Dorsolateral prefrontal cortex (tissue), 120 donors: ENCODE measurements at regions of chr4 and their contacts with region 1.

Region 1: GRCh38 chr4:140326395-140326993 is 47.0 kb upstream of the SCOC start:
- DNase-seq: peak in 3 of 10 donors; percentile 27 to 66 (median 60)
- H3K4me3 ChIP-seq: no peak overlapping the region
- H3K27ac ChIP-seq: no peak overlapping the region
- H3K27me3 ChIP-seq: no peaks in the 10 kb centered on the region
- CTCF ChIP-seq: peak; percentile 7 to 90 (median 72)

Region 2: GRCh38 chr4:140012688-140013486 is 313.6 kb before region 1 on chr4:
- intact Hi-C with region 1: loop called in 1 of 2 experiments (anchors 5 kb)
- DNase-seq: peak in 5 of 10 donors; percentile 25 to 73 (median 52)
- H3K4me3 ChIP-seq: peak overlapping the region in 11 of 59 donors; percentile 4 to 51 (median 18)
- H3K27ac ChIP-seq: no peak overlapping the region
- H3K27me3 ChIP-seq: no peaks in the 10 kb centered on the region
- CTCF ChIP-seq: peak in 55 of 56 donors; percentile 22 to 84 (median 63)

Region 3: DNA sequence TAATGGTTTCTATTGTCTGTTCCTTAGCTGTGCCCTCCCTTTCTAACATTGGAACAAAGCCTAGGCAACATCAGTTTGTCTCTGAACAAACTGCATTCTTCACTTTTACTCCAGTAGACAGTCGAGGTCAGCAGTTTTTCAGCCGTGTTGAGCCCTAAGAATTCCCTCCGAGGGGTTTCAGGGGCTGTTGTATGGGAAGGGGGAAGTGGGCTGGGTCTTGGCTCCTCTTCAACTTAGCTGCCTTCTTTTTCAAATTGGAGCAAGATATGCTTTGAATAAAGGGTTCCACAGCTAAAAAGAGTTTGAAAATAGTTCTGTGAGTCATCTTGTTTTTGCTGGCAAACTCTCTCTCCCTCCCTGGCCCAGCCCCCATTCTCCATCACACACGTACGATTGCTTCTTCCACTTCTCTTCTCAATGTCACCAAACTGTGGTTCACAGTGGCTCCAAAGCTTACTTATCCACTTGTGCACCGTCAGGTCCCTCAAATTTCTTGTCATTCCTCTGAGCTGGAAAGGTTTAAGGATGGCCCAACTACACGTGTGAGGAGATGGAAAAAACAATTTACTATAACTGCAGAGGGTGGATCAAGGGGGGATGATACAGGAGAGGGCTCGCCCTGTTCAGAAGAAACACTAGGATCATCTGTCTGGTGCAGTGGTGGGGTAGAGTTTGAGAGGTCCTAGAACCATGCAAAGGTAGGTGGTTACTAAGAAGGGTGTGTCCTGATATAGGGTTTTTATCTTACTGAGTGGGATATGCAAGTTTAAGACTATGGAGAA is 163.3 kb before region 1 on chr4:
- intact Hi-C with region 1: loop called in 1 of 2 experiments (anchors 5 kb)
- DNase-seq: no peak
- H3K4me3 ChIP-seq: peak overlapping the region in 11 of 59 donors; percentile 7 to 36 (median 17)
- H3K27ac ChIP-seq: no peak overlapping the region
- H3K27me3 ChIP-seq: peaks cover 0 to 5% (median 0%) of the 10 kb centered on the region in 45 donors
- CTCF ChIP-seq: no peak